ENCODE measurements at regions of chr5 and their contacts with region 1.

Region 1: DNA sequence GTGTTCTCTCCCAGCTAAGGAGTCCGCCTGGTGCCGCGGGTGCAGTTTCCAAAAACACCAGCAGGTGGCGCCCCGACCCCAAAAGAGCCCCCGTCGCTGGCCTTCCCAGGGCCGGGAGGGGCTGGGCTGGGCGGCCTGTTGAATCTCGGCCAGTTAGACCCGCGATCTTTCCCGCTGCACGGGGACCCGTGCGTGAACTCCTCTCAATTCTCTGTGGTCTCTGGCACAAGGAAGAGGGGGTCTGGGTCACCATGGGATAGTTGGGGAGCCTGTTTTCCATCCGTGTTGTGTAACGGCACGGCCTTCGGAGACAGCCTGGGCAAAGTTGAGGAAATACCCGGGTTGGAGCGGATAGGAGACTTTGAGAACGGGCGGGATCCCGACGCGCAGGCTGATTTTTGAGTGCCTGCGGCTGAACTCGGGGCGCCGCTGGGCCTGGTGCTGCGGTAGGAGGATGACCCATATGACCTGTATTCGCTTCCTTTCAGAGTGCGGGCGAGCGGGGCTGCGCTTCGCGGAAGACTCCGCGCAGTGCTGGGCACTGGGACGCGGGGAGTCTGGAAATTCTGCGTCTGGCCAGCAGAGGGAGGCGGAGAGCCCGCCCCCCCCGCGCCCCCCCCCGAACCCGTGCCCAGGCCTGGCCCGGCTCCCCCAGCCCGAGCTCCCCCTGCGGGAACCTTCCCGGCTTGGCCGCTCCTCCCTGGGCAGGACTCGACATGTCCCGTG is 7.9 kb upstream of the PSD2 start:
- DNase-seq: peak in 1 of 2 donors; percentile 92
- H3K4me3 ChIP-seq: peak overlapping the region in 2 of 3 donors; percentile 30 to 37
- H3K27ac ChIP-seq: peak overlapping the region in 1 of 3 donors; percentile 44
- H3K4me1 ChIP-seq: peaks cover 13 to 15% of the 10 kb centered on the region in 2 donors
- H3K27me3 ChIP-seq: no peaks in the 10 kb centered on the region
- CTCF ChIP-seq: peak; percentile 94 to 100 (median 99)
- POLR2A ChIP-seq: no peak

Region 2: DNA sequence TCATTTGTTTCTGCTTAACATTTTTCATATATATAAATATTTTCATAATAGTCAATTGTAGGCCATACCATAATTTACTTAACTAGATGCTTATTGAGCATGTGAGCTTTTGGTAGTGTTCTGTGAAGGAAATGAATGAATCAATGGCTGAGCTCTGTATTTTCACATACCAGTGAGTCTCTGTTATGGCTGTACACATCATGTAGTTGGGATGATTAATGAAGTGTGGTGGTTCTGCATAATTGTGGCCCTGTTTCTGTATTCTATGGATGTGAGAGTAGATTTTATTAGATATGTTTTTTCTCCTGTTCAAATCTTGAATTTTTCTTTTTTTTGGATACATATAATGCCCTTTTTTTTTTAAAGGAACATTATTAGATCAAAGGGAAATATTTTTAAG is 978.3 kb before region 1 on chr5:
- intact Hi-C with region 1: no loop called
- DNase-seq: no peak
- H3K4me3 ChIP-seq: no peak overlapping the region
- H3K27ac ChIP-seq: no peak overlapping the region
- H3K4me1 ChIP-seq: peaks cover 0 to 8% of the 10 kb centered on the region in 2 donors
- H3K27me3 ChIP-seq: no peaks in the 10 kb centered on the region
- CTCF ChIP-seq: no peak
- POLR2A ChIP-seq: no peak

Region 3: DNA sequence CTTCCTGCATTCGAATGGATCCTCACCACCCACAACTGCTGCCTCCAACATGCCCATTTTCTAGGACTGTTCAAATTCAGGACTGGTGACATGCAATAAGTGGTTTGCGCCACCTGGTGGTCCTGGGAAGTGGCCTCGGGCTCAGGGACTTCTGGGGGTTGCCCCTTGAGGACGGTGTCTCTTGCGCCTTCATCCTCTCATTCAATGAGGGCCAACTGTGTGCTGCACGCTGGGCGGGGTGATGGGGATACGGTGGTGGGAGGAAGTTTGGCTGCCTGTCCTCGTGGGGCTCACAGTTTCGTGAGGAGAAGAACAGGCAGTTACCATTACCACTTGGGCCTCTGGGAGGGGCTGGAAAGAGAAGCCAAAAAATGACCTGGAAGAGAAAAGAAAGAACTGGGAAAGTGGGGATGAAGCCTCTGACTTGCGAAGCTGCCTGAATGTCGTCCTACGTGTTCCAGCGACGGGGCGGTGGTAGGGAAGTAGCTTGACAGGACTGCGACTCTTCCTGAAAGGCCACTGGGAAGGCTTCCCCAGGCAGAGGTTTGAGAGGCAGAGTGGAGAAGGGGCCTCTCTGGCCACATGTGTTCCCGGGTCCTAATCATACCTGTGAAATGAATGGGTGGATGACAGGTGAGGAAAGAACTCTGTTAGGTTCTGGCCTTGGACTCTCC is 56.9 kb after region 1 on chr5:
- intact Hi-C with region 1: loop called (anchors 5 kb)
- DNase-seq: peak; percentile 81 to 85
- H3K4me3 ChIP-seq: no peak overlapping the region
- H3K27ac ChIP-seq: no peak overlapping the region
- H3K4me1 ChIP-seq: peaks cover 5 to 10% of the 10 kb centered on the region in 2 donors
- H3K27me3 ChIP-seq: no peaks in the 10 kb centered on the region
- CTCF ChIP-seq: peak; percentile 52 to 76 (median 73)
- POLR2A ChIP-seq: no peak

Region 4: GRCh38 chr5:139863855-139864558 is 76.3 kb after region 1 on chr5:
- intact Hi-C with region 1: loop called (anchors 5 kb)
- DNase-seq: peak; percentile 75
- H3K4me3 ChIP-seq: no peak overlapping the region
- H3K27ac ChIP-seq: no peak overlapping the region
- H3K4me1 ChIP-seq: peaks cover 9 to 16% of the 10 kb centered on the region in 2 donors
- H3K27me3 ChIP-seq: no peaks in the 10 kb centered on the region
- CTCF ChIP-seq: peak; percentile 85 to 95 (median 89)
- POLR2A ChIP-seq: no peak

Region 5: DNA sequence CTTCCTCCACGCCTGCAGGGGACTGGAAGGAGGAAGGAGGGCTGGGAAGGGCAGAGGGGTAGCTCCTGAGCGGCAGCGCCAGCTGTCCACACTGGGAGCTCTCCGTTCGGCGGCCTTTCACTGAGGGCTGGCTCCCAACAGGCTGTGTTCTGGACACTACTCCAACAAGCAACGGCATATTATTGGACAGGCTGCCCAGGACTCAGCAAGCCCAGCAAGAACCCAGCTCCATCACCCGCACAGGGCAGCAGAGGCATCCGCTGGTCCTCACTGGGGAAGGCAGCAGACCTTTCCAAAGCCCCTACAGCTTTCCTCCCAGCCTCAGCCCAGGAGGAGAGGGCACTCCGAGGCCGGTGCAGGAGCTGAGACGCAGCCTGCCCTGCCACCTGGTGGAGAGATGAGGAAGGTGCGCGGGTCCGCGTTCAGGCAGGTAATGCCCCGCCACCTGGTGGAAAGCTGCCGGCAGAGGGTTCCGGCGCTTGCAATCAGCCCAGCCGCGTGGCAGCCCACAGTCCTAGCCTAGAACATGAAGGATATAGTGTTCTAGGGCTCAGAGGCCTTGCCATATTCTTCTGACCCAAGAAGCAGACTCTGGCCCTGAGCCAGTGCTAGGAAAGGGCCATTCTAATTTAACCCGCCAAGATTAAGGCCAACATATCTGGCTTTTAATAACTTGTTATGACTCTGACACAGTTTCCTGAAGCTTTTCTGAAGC is 181.0 kb after region 1 on chr5:
- intact Hi-C with region 1: loop called (anchors 5 kb)
- DNase-seq: peak; percentile 92 to 94
- H3K4me3 ChIP-seq: no peak overlapping the region
- H3K27ac ChIP-seq: no peak overlapping the region
- H3K4me1 ChIP-seq: peaks cover 0 to 5% of the 10 kb centered on the region in 2 donors
- H3K27me3 ChIP-seq: no peaks in the 10 kb centered on the region
- CTCF ChIP-seq: peak; percentile 99 to 100 (median 100)
- POLR2A ChIP-seq: no peak